ENCODE measurements at regions of chr6 and their contacts with region 1.

Region 1: DNA sequence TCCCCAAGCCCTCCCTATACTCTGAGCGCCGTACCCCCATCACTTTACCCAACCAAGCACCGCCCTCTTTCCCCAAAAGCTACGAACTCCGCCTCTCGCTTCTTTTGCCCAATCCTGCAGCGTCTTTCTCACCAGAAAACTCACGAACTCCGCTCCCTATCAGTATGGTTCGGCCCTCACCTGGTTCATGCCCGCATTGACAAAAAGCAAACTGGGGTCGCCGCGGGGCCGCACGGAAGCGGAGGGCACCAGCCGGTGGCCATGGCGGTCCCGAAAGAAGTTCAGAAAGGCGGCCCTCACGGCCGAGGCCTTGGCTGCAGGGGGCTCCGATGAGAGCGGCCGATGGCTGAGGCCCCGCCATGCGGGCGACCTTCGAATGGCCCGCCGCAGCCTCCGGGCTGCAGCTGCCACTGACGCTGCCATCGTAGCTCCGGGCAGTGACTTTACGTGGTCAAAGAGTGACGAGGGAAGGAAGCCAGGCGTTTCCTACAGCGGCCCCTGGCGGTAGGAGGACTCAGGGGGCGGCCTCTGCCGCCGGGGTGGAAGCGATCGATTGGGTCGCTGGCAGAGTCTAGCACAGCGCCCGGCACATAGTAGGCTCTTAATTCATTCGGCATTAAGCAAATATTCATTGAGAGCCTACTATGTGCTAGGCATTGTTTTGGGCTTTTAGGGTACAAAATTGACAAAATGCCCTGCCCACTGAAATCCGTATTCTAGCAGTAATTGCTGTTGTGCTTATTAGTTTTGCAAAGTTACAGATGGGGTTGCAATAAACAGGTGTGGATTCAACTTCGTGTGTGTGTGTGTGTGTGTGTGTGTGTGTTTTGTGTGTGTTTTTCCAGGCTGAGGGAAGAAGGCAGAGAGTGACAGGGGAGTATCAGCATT is at the start of gene AARS2:
- DNase-seq: peak; percentile 79 to 95 (median 88)
- ATAC-seq: peak; percentile 99
- H3K4me3 ChIP-seq: peak within 1 kb of the TSS; percentile 91
- H3K4me3 Mint-ChIP-seq: peak within 1 kb of the TSS; percentile 94 to 100 (median 96)
- H3K27ac ChIP-seq: peak within 1 kb of the TSS; percentile 89
- H3K27ac Mint-ChIP-seq: peak within 1 kb of the TSS; percentile 88 to 98 (median 94)
- H3K4me1 ChIP-seq: peaks cover 7 to 9% of the 10 kb centered on the region in 2 donors
- H3K4me1 Mint-ChIP-seq: peaks cover 16 to 32% (median 25%) of the 10 kb centered on the region in 7 donors
- H3K27me3 ChIP-seq: no peaks in the 10 kb centered on the region
- H3K27me3 Mint-ChIP-seq: peaks cover 0 to 13% (median 3%) of the 10 kb centered on the region in 5 donors
- total RNA-seq, gene AARS2: 13.5 to 29.8 (median 20.9) TPM

Region 2: GRCh38 chr6:43621429-43622180 is 691.5 kb before region 1 on chr6:
- CTCF ChIA-PET with region 1: no interaction called
- POLR2A ChIA-PET with region 1: no interaction called
- intact Hi-C with region 1: no loop called
- DNase-seq: no peak
- ATAC-seq: no peak
- H3K4me3 ChIP-seq: no peak overlapping the region
- H3K4me3 Mint-ChIP-seq: no peak overlapping the region
- H3K27ac ChIP-seq: no peak overlapping the region
- H3K27ac Mint-ChIP-seq: peak overlapping the region in 2 of 9 donors; percentile 22 to 32
- H3K4me1 ChIP-seq: no peaks in the 10 kb centered on the region
- H3K4me1 Mint-ChIP-seq: peaks cover 0 to 21% (median 9%) of the 10 kb centered on the region in 7 donors
- H3K27me3 ChIP-seq: no peaks in the 10 kb centered on the region
- H3K27me3 Mint-ChIP-seq: no peaks in the 10 kb centered on the region

Region 3: GRCh38 chr6:44327096-44327495 is 14.0 kb after region 1 on chr6:
- CTCF ChIA-PET with region 1: no interaction called
- POLR2A ChIA-PET with region 1: no interaction called
- intact Hi-C with region 1: no loop called
- DNase-seq: no peak
- ATAC-seq: no peak
- H3K4me3 ChIP-seq: no peak overlapping the region
- H3K4me3 Mint-ChIP-seq: no peak overlapping the region
- H3K27ac ChIP-seq: no peak overlapping the region
- H3K27ac Mint-ChIP-seq: no peak overlapping the region
- H3K4me1 ChIP-seq: no peaks in the 10 kb centered on the region
- H3K4me1 Mint-ChIP-seq: no peaks in the 10 kb centered on the region
- H3K27me3 ChIP-seq: no peaks in the 10 kb centered on the region
- H3K27me3 Mint-ChIP-seq: peaks cover 15 to 36% (median 28%) of the 10 kb centered on the region in 5 donors

Region 4: DNA sequence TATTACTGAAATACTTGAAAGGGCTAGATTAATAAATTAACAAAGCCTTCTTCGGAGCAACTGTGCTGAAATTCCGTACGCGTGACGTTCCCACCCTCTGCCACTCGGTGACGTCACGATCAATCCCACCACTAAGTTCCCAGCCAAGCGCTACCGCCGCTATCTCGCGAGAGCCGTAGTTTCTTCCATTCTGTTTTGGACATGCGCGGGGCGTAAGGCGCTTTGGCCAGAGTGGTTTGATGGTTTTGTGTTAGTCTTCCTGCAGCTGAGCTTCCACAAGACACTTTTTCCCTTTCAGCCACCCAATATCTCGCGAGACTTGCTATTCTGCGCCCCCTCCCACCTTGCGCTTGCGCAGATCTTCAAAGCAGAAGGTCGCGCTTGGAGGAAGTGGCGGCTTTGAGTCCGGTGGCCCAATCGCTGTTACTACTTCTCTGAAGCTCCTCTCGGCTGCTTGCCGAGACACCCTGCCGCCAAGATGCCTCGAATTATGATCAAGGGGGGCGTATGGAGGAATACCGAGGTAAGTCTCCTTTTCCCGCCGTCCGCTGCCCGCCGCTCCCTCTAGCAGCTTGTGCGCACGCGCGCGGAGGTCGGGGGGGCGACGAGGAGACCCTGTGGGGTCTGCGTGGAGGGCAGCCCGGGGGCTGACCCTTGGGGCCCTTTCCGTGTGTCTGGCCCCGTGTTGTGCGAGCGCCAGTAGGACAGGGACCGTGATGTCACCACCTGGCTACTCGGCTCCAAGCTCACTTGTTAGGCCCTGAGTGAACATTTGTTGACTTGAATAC is 74.4 kb after region 1 on chr6 and contains the start of gene CDC5L:
- CTCF ChIA-PET with region 1: no interaction called
- POLR2A ChIA-PET with region 1: interaction called, 5 read pairs
- intact Hi-C with region 1: loop called (anchors 1 to 2 kb)
- DNase-seq: peak; percentile 80 to 96 (median 93)
- ATAC-seq: peak; percentile 88
- H3K4me3 ChIP-seq: peak within 1 kb of the TSS; percentile 71
- H3K4me3 Mint-ChIP-seq: peak within 1 kb of the TSS; percentile 91 to 100 (median 96)
- H3K27ac ChIP-seq: peak within 1 kb of the TSS; percentile 85
- H3K27ac Mint-ChIP-seq: peak within 1 kb of the TSS; percentile 91 to 99 (median 96)
- H3K4me1 ChIP-seq: peaks cover 17 to 29% of the 10 kb centered on the region in 2 donors
- H3K4me1 Mint-ChIP-seq: peaks cover 24 to 49% (median 46%) of the 10 kb centered on the region in 7 donors
- H3K27me3 ChIP-seq: no peaks in the 10 kb centered on the region
- H3K27me3 Mint-ChIP-seq: peaks cover 0 to 28% (median 0%) of the 10 kb centered on the region in 5 donors
- total RNA-seq, gene CDC5L: 17.4 to 25.4 (median 22.4) TPM

Region 5: DNA sequence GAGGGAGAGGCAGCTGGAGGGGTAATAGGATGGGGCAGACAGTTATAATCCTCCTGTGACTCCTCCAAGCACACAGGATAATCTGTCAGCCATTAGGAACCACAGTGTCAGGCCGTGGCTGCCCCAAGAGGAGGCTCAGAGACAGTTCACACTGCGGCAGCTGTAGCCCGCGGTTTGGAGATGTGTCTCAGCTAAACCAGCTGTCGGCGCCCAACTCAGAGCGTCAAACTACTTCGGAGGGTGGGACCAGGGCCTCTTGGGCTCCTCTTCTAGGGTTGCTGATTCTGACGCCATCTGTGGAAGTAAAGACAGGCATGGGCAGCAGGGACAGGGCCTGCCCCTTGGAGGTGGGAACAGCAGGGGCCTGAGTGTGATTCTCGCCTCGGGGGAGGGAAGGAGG is 384.2 kb after region 1 on chr6:
- CTCF ChIA-PET with region 1: no interaction called
- POLR2A ChIA-PET with region 1: no interaction called
- intact Hi-C with region 1: no loop called
- DNase-seq: no peak
- ATAC-seq: peak; percentile 31
- H3K4me3 ChIP-seq: no peak overlapping the region
- H3K4me3 Mint-ChIP-seq: no peak overlapping the region
- H3K27ac ChIP-seq: no peak overlapping the region
- H3K27ac Mint-ChIP-seq: no peak overlapping the region
- H3K4me1 ChIP-seq: no peaks in the 10 kb centered on the region
- H3K4me1 Mint-ChIP-seq: peaks cover 0 to 7% (median 5%) of the 10 kb centered on the region in 7 donors
- H3K27me3 ChIP-seq: no peaks in the 10 kb centered on the region
- H3K27me3 Mint-ChIP-seq: peaks cover 0 to 6% (median 0%) of the 10 kb centered on the region in 5 donors

Measured in naive thymus-derived CD4-positive, alpha-beta T cell (primary cell).